PC-3 (cell line): ENCODE measurements at regions of chr17 and their contacts with region 1.

Region 1: DNA sequence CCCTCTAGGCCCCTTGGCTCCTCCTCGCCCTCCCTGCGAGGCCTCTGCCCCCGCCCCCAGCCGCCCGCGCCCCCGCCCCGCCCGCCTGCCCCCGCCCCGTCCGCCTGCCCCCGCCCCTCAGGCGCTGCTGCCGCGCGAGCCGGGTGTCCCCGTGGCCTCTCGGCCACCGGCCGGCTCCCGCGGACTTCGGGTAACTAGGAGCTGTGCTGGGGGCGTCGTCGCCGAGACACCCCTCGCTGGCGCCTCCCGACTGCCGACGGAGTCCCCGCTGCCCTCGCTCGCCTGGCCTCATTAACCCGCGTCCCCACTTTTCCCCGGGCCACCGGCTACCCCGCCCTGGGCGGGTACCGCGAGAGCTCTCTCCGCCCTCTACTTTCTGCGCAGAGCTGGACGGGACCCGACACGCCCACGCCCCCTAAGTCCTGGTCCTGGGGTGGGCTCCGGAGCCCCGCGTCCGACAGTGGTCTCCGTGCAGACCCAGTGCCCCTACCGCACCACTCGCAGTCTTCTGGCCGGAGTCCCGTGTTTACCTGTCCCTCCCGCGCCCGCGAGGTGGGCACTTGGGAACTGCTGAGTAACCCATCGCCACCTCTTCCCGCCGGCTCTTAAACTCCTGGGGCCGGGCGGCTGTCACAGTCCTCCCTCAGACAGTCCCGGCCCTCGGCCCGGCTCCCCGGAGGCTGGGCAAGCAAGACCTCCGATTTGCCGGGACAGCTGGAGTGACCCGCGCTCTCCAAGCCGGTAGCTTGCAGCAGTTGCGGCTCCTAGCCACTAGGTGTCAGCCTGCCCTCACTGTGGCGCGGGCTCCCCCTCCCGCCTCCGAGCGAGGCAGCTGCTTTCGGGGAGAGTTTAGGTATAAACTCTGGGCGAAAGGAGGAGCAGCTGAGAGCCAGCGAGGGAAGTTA is at the start of gene TLCD1:
- DNase-seq: peak; percentile 93
- ATAC-seq: peak; percentile 34
- H3K4me3 ChIP-seq: peak within 1 kb of the TSS; percentile 86
- H3K27ac ChIP-seq: peak within 1 kb of the TSS; percentile 99
- H3K4me1 ChIP-seq: peaks cover 37% of the 10 kb centered on the region
- H3K27me3 ChIP-seq: no peaks in the 10 kb centered on the region
- CTCF ChIP-seq: peak; percentile 93
- total RNA-seq, gene TLCD1: 7.1 and 9.3 TPM in 2 replicates

Region 2: GRCh38 chr17:28644985-28645939 is 81.2 kb before region 1 on chr17 and contains the start of gene BLTP2:
- CTCF ChIA-PET with region 1: no interaction called
- POLR2A ChIA-PET with region 1: no interaction called
- intact Hi-C with region 1: no loop called
- DNase-seq: peak; percentile 90
- ATAC-seq: peak; percentile 98
- H3K4me3 ChIP-seq: peak within 1 kb of the TSS; percentile 80
- H3K27ac ChIP-seq: peak within 1 kb of the TSS; percentile 25; the same call in 1 of the 2 replicates
- H3K4me1 ChIP-seq: peaks cover 13% of the 10 kb centered on the region
- H3K27me3 ChIP-seq: no peaks in the 10 kb centered on the region
- CTCF ChIP-seq: no peak
- total RNA-seq, gene BLTP2: 103 and 171 TPM in 2 replicates

Region 3: GRCh38 chr17:28710861-28711722 is 15.4 kb before region 1 on chr17:
- CTCF ChIA-PET with region 1: interaction called, 3 read pairs
- POLR2A ChIA-PET with region 1: interaction called, 10 read pairs
- intact Hi-C with region 1: no loop called
- DNase-seq: peak; percentile 87
- ATAC-seq: peak; percentile 96
- H3K4me3 ChIP-seq: peak overlapping the region; percentile 74
- H3K27ac ChIP-seq: peak overlapping the region; percentile 70
- H3K4me1 ChIP-seq: peaks cover 4% of the 10 kb centered on the region; the same call in 1 of the 2 replicates
- H3K27me3 ChIP-seq: no peaks in the 10 kb centered on the region
- CTCF ChIP-seq: no peak

Region 4: DNA sequence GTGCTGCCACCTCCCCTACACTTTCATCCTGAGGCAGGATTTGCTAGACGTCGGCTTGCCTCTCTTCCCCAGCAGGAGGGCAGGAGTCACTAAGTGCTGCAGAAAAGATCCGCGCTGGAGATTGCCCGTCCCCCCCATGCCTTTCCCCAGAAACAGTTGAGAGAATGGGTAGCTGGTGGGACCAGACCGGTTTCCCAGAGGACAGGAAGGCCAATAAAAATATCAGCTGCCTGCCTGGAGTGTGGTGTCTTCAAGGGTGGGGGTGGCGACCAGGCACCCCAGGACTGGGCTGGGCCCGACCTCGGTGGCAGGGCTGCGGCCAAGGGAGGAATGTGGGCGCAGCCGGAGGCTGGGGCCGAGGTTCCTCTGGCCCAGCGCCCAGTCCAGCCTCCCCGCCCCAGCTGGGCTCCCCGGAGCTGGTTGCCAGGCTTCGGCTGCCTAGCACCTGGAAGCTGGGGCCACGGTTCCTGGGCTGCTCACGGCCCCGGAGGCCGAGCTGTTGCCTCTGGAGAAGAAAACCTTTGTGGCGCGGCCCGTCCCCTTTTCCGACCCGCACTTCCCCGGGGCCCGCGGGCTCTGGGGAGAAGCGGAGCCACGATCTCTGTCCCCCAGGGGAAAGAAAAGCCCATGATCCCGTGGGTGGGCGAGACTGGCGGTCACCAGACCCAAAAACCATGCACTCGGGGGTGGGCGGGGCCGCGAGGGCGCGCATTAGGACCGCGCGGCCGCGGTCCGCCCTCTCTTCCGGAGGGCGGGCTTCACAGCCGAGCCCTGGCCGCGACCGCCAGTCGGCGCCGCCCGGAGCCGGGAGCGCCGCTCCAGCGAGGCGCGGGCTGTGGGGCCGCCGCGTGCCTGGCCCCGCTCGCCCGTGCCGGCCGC is 17.0 kb after region 1 on chr17 and contains the start of gene TRAF4:
- CTCF ChIA-PET with region 1: interaction called, 14 read pairs
- POLR2A ChIA-PET with region 1: interaction called, 51 read pairs
- intact Hi-C with region 1: loop called (anchors 1 kb)
- DNase-seq: peak; percentile 80
- ATAC-seq: peak; percentile 59
- H3K4me3 ChIP-seq: peak within 1 kb of the TSS; percentile 89
- H3K27ac ChIP-seq: peak within 1 kb of the TSS; percentile 99
- H3K4me1 ChIP-seq: peaks cover 27% of the 10 kb centered on the region
- H3K27me3 ChIP-seq: no peaks in the 10 kb centered on the region
- CTCF ChIP-seq: no peak
- total RNA-seq, gene TRAF4: 81.5 and 104 TPM in 2 replicates

Region 5: DNA sequence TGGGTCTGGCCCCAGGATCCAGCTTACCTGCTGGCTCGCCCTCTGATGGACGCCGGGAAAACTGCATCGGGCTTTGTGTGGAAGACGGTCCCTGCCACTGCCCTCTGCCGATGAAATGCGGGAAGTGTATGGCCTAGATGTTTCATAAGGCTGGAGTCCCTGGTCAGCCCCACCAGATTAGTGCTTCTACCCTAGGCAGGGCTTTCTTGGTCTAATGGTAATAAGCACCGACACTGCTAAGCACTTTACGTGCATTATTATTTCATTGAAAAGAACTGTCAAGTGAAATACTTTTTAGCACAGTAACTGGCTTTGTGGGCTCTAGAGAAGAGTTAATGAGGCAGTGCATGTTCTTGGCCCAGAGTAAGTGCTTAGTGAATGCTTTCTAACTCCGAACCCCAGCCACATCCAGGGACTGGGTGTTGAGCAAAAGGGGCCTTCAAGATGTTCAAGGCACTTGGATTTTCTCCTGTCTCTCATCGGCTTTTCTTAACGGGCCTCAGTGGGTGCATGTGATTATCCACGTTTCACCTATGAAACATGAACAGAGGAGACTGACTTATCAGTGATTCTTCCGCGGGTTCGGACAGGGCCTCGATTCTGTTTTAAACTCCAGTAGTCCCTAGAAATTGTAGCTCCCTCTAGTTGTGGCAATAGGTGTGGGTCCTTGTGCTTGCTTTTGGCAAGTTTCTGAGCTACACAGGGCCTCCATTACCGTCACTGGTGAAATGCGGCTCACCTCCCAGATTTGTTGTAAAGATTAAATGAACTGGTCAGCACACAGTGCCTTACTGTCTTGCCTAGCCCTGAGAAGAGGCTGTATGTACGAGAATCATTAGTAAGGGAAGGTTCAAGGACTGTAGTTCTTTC is 23.9 kb after region 1 on chr17:
- CTCF ChIA-PET with region 1: interaction called, 55 read pairs
- POLR2A ChIA-PET with region 1: interaction called, 4 read pairs
- intact Hi-C with region 1: loop called (anchors 1 kb)
- DNase-seq: peak; percentile 90
- ATAC-seq: peak; percentile 42
- H3K4me3 ChIP-seq: no peak overlapping the region
- H3K27ac ChIP-seq: no peak overlapping the region
- H3K4me1 ChIP-seq: peaks cover 24% of the 10 kb centered on the region
- H3K27me3 ChIP-seq: no peaks in the 10 kb centered on the region
- CTCF ChIP-seq: peak; percentile 92

Region 6: DNA sequence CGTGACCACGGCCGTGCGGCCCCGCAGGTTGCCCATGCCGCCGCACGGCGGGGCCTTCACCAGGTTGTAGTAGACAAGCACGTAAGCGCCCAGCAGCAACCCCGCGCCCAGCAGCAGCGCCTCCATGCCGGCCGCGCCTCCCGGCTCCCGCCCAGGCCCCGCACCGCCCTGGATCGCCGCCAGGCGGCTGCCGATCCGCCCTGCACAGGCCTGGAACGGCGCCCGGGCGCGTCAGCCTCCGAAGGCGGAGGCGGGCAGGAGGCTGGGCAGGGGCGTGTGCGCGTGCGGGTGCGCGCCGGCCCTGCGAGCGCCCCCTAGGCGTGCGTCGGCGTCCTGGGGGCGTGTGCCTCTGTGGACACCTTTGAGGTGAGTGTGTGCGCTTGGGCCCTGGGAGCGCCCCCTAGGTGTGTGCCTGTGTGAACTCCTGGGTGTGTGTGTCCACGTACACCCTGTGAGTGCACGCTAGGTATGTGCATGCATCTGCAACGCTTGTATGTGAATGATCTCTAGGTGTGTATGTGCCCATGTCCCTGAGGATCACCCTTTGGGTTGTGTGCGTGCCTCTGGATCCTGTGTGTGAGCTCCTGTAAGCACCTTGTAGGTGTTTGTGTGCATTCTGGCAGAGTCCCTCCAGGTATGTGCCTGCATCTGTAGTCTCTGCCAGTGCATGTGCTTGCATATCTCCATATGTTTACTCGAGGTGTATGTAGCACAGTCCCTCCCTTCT is 176.5 kb after region 1 on chr17 and contains the start of gene DHRS13:
- CTCF ChIA-PET with region 1: no interaction called
- POLR2A ChIA-PET with region 1: interaction called, 18 read pairs
- intact Hi-C with region 1: loop called (anchors 10 kb)
- DNase-seq: peak; percentile 92
- ATAC-seq: peak; percentile 91
- H3K4me3 ChIP-seq: peak within 1 kb of the TSS; percentile 78
- H3K27ac ChIP-seq: no peak within 1 kb of the TSS
- H3K4me1 ChIP-seq: peaks cover 11% of the 10 kb centered on the region
- H3K27me3 ChIP-seq: no peaks in the 10 kb centered on the region
- CTCF ChIP-seq: peak; percentile 88
- total RNA-seq, gene DHRS13: 4.9 and 5.1 TPM in 2 replicates

Region 7: GRCh38 chr17:28951991-28952975 is 225.8 kb after region 1 on chr17:
- CTCF ChIA-PET with region 1: interaction called, 6 read pairs
- POLR2A ChIA-PET with region 1: interaction called, 4 read pairs
- intact Hi-C with region 1: loop called (anchors 2 kb)
- DNase-seq: peak; percentile 97
- ATAC-seq: peak; percentile 77
- H3K4me3 ChIP-seq: peak overlapping the region; percentile 82
- H3K27ac ChIP-seq: peak overlapping the region; percentile 97
- H3K4me1 ChIP-seq: peaks cover 22% of the 10 kb centered on the region
- H3K27me3 ChIP-seq: no peaks in the 10 kb centered on the region
- CTCF ChIP-seq: no peak